Esophagus muscularis mucosa (tissue), 4 donors: ENCODE measurements at regions of chr21 and their contacts with region 1.

Region 1: DNA sequence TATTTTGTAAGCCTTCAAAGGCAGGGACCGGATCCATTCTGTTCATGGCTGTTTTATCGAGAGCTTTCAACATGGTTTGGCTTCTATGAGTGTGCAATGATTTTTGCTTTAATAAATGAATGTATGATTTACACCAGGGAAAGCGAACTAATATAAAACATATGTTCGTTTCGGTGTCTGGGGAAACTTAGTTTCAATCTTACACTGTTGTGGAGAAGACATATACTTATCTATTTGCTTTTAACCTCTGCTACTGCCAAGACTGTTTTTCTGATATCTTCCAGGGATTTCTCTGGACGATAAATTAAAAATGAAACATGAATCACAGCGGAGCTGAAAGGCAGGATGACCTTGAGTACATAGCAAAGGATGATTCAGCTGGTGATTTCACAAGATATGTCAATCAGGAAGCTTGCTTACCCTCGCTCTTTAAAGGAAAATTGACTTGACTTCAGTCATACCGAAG is 14.7 kb upstream of the CYYR1 start:
- DNase-seq: no peak
- H3K4me3 ChIP-seq: peak overlapping the region in 3 of 4 donors; percentile 1 to 26 (median 14)
- H3K27ac ChIP-seq: no peak overlapping the region
- H3K4me1 ChIP-seq: no peaks in the 10 kb centered on the region
- H3K27me3 ChIP-seq: no peaks in the 10 kb centered on the region
- CTCF ChIP-seq: no peak
- EP300 ChIP-seq: no peak
- POLR2A ChIP-seq: no peak

Region 2: DNA sequence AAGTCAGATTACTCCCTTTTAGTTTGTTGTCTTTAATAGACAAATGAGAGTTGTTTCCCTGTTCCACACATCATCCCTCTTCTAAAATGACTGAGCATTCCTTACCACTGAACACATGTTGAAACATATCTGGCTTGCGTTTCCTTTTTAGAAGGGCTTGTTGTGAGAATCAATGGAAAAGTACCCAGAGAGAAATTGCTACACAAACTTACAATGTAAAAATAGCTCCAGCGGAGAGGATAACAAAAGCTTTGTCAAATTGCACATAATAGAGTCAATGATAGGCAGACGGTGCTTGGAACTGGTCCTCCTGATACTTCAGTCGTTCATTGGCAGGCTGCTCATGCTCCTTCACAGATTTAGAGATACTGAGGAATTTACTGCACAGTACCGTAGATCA is 138.6 kb before region 1 on chr21:
- intact Hi-C with region 1: no loop called
- DNase-seq: no peak
- H3K4me3 ChIP-seq: no peak overlapping the region
- H3K27ac ChIP-seq: no peak overlapping the region
- H3K4me1 ChIP-seq: no peaks in the 10 kb centered on the region
- H3K27me3 ChIP-seq: no peaks in the 10 kb centered on the region
- CTCF ChIP-seq: no peak
- EP300 ChIP-seq: no peak
- POLR2A ChIP-seq: no peak

Region 3: DNA sequence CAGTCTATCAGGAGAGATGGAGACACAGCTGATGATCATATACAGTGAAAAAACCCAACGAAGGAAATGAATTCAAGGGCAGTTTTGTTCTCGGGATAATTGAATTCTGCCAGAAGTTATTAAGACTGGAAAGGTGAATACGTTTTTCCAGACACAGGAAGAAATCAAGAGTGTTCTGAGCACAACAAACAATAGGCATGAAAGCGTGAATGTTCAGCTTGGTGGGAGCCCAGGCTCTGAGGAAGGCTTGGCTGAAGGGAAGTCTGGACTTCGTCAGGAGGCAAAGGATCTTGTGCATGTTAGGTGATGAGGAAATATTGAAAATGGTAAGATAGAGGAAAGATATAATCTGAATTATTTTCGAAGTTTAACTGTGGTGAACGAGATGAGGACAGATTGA is 65.1 kb before region 1 on chr21:
- intact Hi-C with region 1: loop called (anchors 10 kb)
- DNase-seq: no peak
- H3K4me3 ChIP-seq: no peak overlapping the region
- H3K27ac ChIP-seq: no peak overlapping the region
- H3K4me1 ChIP-seq: no peaks in the 10 kb centered on the region
- H3K27me3 ChIP-seq: no peaks in the 10 kb centered on the region
- CTCF ChIP-seq: no peak
- EP300 ChIP-seq: no peak
- POLR2A ChIP-seq: no peak

Region 4: DNA sequence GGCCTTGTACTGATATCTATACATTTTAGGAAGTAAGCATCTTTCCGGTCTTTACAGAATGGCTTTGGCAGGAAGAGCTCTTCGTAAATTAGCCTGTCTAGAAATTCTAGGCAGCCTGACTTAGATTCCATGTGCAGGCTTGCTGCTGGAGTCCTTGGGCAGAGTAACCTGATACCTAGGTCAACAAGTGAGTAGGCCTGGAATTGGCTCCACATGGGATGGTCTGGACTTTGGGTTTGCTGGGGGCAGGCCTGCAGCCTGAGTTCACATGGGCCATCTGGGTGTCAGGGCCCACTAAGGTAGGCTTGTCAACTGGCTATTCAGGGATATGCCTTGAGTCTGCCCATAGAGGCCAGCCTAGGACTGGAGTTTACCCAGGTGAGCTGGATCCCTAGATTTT is 44.9 kb after region 1 on chr21:
- intact Hi-C with region 1: no loop called
- DNase-seq: no peak
- H3K4me3 ChIP-seq: no peak overlapping the region
- H3K27ac ChIP-seq: no peak overlapping the region
- H3K4me1 ChIP-seq: no peaks in the 10 kb centered on the region
- H3K27me3 ChIP-seq: no peaks in the 10 kb centered on the region
- CTCF ChIP-seq: no peak
- EP300 ChIP-seq: no peak
- POLR2A ChIP-seq: no peak

Region 5: GRCh38 chr21:26652854-26653253 is 65.1 kb after region 1 on chr21:
- intact Hi-C with region 1: no loop called
- DNase-seq: no peak
- H3K4me3 ChIP-seq: no peak overlapping the region
- H3K27ac ChIP-seq: no peak overlapping the region
- H3K4me1 ChIP-seq: no peaks in the 10 kb centered on the region
- H3K27me3 ChIP-seq: no peaks in the 10 kb centered on the region
- CTCF ChIP-seq: no peak
- EP300 ChIP-seq: no peak
- POLR2A ChIP-seq: no peak